Left ventricle myocardium inferior (tissue), 1 donor: ENCODE measurements at regions of chr1 and their contacts with region 1.

Region 1: DNA sequence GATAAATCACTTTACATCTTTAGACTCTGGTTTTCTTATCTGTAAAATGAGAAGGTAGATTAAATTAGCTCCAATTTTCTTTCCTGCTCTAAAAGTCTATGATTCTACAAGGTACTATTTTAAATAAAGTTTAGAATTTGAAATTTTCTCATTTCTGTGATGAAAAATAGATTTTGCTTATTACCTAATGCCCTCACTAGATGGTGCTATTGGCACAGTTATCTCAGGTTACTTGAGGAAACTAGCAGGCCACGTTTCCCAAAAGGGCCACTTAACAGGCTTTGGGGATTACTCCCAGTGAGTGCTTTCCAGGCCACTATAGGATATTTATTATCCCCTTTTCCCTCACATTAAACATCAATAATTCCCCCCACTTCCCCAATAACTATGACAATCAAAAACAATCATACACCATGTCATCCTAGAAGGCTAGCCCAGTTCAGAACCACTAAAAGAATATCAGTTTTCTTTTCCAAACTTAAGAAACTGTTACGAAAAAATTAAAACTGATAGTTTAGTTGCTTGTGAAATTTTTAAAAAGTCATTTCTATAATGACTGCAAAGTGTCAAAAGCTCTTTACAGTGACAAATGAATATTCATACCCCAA is 30.6 kb downstream of the OMA1 start:
- DNase-seq: no peak
- H3K4me3 ChIP-seq: no peak overlapping the region
- H3K27ac ChIP-seq: no peak overlapping the region
- H3K4me1 ChIP-seq: peaks cover 11% of the 10 kb centered on the region
- H3K27me3 ChIP-seq: no peaks in the 10 kb centered on the region
- CTCF ChIP-seq: peak; percentile 74

Region 2: DNA sequence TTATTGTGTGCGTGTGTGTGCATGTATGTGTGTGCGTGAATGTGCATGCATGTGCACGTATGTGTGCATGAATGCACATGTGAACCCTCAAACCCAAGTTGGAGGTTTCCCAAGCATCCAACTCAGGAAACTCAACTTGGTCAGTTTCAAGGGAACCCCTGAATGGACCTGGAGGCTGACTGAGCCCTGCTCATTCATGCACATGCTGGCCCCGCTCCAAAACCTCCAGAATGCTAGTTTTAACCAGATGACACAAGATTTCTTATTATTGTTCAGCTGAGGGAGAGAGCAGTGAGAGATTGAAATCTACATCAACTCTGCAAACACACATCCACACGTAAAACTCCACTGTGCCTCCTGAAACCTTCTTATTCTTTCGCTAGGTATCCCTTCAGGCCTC is 73.8 kb before region 1 on chr1:
- intact Hi-C with region 1: no loop called
- DNase-seq: no peak
- H3K4me3 ChIP-seq: no peak overlapping the region
- H3K27ac ChIP-seq: no peak overlapping the region
- H3K4me1 ChIP-seq: peaks cover 9% of the 10 kb centered on the region
- H3K27me3 ChIP-seq: no peaks in the 10 kb centered on the region
- CTCF ChIP-seq: no peak

Region 3: GRCh38 chr1:58652651-58653184 is 136.8 kb after region 1 on chr1:
- intact Hi-C with region 1: loop called (anchors 2 kb)
- DNase-seq: peak; percentile 16
- H3K4me3 ChIP-seq: no peak overlapping the region
- H3K27ac ChIP-seq: no peak overlapping the region
- H3K4me1 ChIP-seq: peaks cover 10% of the 10 kb centered on the region
- H3K27me3 ChIP-seq: no peaks in the 10 kb centered on the region
- CTCF ChIP-seq: peak; percentile 88